ENCODE measurements at regions of chr17 and their contacts with region 1.

Region 1: GRCh38 chr17:57106107-57106835 is 21.2 kb downstream of the AKAP1 start:
- DNase-seq: peak; percentile 61
- ATAC-seq: peak; percentile 74
- H3K4me3 Mint-ChIP-seq: no peak overlapping the region
- H3K27ac Mint-ChIP-seq: peak overlapping the region; percentile 88
- H3K4me1 Mint-ChIP-seq: peaks cover 69% of the 10 kb centered on the region
- H3K27me3 Mint-ChIP-seq: no peaks in the 10 kb centered on the region
- CTCF ChIP-seq: peak; percentile 33; the same call in 1 of the 2 replicates

Region 2: DNA sequence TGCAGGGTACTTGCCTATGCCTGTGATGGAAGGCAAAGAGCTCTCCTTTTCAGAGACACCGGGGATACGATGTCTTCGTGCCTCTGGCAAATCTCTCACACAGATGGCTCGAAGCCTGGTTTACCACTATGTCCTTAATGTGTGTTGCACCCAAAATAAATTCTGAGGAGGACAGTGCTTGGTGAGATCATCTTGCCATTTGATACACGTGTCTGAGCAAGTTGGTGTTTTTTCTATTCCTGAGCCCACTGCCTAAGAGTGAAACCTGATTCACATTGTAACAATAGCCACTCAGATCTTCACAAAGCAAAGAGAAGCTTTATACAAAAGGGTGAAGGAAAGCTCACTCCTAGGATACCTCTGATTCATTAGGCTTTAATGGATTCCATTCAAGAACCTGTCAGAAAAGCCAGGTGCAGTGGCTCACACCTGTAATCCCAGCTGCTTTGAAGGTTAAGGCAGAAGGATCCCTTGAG is 54.3 kb before region 1 on chr17:
- CTCF ChIA-PET with region 1: interaction called, 10 read pairs
- POLR2A ChIA-PET with region 1: interaction called, 3 read pairs
- DNase-seq: no peak
- ATAC-seq: peak; percentile 43; the same call in 1 of the 2 replicates
- H3K4me3 Mint-ChIP-seq: no peak overlapping the region
- H3K27ac Mint-ChIP-seq: peak overlapping the region; percentile 78; the same call in 1 of the 2 replicates
- H3K4me1 Mint-ChIP-seq: peaks cover 23% of the 10 kb centered on the region
- H3K27me3 Mint-ChIP-seq: no peaks in the 10 kb centered on the region
- CTCF ChIP-seq: no peak

Region 3: GRCh38 chr17:57084802-57085447 is 21.3 kb before region 1 on chr17 and contains the start of gene AKAP1:
- CTCF ChIA-PET with region 1: interaction called, 24 read pairs
- POLR2A ChIA-PET with region 1: interaction called, 4 read pairs
- DNase-seq: peak; percentile 96
- ATAC-seq: peak; percentile 96
- H3K4me3 Mint-ChIP-seq: peak within 1 kb of the TSS; percentile 88
- H3K27ac Mint-ChIP-seq: peak within 1 kb of the TSS; percentile 98
- H3K4me1 Mint-ChIP-seq: peaks cover 53% of the 10 kb centered on the region
- H3K27me3 Mint-ChIP-seq: peaks cover 2% of the 10 kb centered on the region; the same call in 1 of the 2 replicates
- CTCF ChIP-seq: no peak
- total RNA-seq, gene AKAP1: 55.9 to 74.5 TPM (median 56.2 TPM) in 3 replicates

Region 4: DNA sequence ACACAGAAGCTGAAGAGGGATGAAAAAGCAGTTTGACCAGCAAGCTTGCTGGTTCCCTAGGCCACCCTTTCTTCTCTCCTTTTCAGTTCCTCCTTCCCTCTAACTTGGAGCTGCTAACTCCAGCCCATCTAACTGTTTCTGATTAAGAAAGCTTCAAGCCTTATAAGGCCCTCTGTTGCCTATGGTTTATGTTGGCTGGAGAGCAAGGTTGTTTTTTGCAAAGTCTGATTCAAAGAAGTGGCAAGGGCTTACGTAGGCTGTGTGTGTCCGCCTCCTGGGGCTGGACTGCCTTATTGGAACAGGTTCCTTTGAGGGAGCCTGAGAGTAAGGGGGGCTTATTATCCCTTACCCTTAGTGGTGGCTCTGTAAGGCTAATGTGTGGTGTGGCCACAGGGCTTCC is 14.1 kb before region 1 on chr17:
- CTCF ChIA-PET with region 1: interaction called, 29 read pairs
- POLR2A ChIA-PET with region 1: no interaction called
- DNase-seq: no peak
- ATAC-seq: no peak
- H3K4me3 Mint-ChIP-seq: no peak overlapping the region
- H3K27ac Mint-ChIP-seq: no peak overlapping the region
- H3K4me1 Mint-ChIP-seq: peaks cover 90% of the 10 kb centered on the region
- H3K27me3 Mint-ChIP-seq: no peaks in the 10 kb centered on the region
- CTCF ChIP-seq: no peak

Measured in WTC11 (cell line).